GM12878 (cell line): ENCODE measurements at regions of chr15 and their contacts with region 1.

Region 1: DNA sequence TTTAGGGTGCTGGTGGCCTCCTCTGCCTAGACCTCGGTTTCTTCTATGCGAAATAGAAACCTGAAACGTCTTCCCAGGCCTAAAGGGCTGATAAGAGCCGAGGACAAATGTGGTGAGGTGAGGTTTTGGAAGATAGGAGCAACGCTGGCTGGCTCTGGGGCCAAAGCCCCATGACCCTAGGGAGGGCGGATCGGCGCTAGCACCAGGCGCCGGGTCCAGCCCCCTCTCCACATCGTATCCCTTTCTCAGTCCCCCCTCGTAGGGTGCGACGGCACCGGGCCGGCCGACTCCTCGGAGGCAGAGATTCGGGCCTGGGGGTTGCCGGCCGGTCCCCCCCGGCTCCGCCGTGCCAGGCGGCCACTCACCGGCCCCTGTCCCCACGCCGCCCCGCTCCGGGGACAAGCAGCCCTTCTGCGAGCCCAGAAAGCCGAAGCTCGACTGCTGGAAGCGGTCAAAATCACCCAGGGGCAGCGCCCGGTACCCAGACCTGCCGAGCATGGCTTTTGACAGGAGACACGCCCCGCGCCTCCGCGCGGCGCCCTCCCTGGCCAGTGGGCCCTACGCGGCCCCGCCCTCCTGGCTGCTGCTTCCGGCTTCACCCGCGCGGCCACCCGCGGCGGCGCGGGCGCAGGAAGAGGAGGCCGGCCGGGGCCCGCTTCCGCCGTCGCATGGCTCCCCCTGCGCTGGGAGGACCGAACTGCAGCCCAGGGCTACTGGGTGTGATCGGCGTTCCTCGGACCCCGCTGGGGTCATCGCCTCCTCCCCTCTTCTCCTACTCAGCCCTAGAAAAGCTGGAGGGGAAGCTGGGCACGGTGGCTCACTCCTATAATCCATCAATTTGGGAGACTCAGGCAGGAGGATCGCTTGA is at the start of gene STOML1:
- DNase-seq: no peak
- ATAC-seq: peak; percentile 85
- H3K4me3 ChIP-seq: peak within 1 kb of the TSS; percentile 95
- H3K27ac ChIP-seq: peak within 1 kb of the TSS; percentile 54
- H3K4me1 ChIP-seq: peaks cover 31% of the 10 kb centered on the region
- H3K27me3 ChIP-seq: no peaks in the 10 kb centered on the region
- CTCF ChIP-seq: peak; percentile 89 to 93 (median 92)
- EP300 ChIP-seq: no peak
- POLR2A ChIP-seq: peak; percentile 79
- RAD21 ChIP-seq: no peak
- polyA plus RNA-seq, gene STOML1: 0.14 to 0.46 TPM

Region 2: GRCh38 chr15:73897441-73898261 is 94.3 kb before region 1 on chr15:
- CTCF ChIA-PET with region 1: no interaction called
- POLR2A ChIA-PET with region 1: no interaction called
- RAD21 ChIA-PET with region 1: no interaction called
- SMC1A ChIA-PET with region 1: no interaction called
- in situ Hi-C with region 1: no loop called
- intact Hi-C with region 1: no loop called
- DNase-seq: no peak
- ATAC-seq: peak; percentile 95
- H3K4me3 ChIP-seq: no peak overlapping the region
- H3K27ac ChIP-seq: no peak overlapping the region
- H3K4me1 ChIP-seq: no peaks in the 10 kb centered on the region
- H3K27me3 ChIP-seq: peaks cover 0 to 3% of the 10 kb centered on the region in 2 experiments; a peak in 2 of 4 replicates
- CTCF ChIP-seq: peak; percentile 71 to 89 (median 85)
- EP300 ChIP-seq: no peak
- POLR2A ChIP-seq: no peak
- RAD21 ChIP-seq: peak; percentile 34

Region 3: DNA sequence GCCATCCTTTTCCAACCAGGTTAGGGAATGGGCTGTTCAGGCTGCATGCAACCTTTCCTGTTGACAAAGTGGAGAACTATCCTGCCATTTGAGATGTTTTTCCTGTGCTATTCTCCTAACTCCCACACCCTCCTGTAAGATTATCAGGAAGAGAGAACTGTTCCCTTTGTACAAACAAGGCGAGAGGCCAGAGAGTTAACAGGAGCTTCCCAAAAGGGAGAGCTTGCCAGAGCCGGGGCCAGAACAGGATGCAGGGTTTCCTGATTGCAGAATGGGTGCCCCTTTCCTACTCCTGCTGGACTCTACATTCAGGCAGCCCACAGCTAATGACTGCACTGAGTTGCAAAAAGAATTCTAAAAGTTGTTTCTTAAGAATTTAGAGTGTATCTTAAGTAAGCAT is 19.6 kb after region 1 on chr15:
- CTCF ChIA-PET with region 1: interaction called, 36 read pairs
- POLR2A ChIA-PET with region 1: interaction called, 44 read pairs
- RAD21 ChIA-PET with region 1: interaction called, 16 read pairs
- SMC1A ChIA-PET with region 1: interaction called, 28 read pairs
- in situ Hi-C with region 1: no loop called
- intact Hi-C with region 1: no loop called
- DNase-seq: no peak
- ATAC-seq: no peak
- H3K4me3 ChIP-seq: no peak overlapping the region
- H3K27ac ChIP-seq: no peak overlapping the region
- H3K4me1 ChIP-seq: peaks cover 15% of the 10 kb centered on the region
- H3K27me3 ChIP-seq: no peaks in the 10 kb centered on the region
- CTCF ChIP-seq: no peak
- EP300 ChIP-seq: no peak
- POLR2A ChIP-seq: no peak
- RAD21 ChIP-seq: no peak